AG04450 (cell line): ENCODE measurements at regions of chr18 and their contacts with region 1.

Region 1: DNA sequence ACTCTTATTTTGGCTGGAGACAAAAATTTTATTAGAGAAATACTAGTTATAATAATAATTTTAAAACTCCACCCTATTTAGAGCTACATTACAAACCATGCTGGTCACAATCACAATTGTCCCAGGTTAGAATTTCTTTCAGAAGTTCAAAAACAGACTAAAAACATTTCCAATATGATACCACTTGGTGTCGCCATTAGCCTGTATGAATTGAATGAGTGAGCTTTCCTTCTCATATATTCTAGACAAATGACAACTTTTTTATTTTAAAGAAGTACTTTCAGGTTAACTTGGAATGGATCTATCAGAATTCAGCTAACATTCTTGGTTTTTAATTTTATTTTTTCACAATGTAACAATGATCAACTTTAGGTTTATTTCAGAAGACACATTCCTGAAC is 48.0 kb downstream of the SERPINB8 start:
- DNase-seq: no peak
- H3K4me3 ChIP-seq: no peak overlapping the region
- H3K27ac ChIP-seq: no peak overlapping the region
- H3K27me3 ChIP-seq: no peaks in the 10 kb centered on the region
- CTCF ChIP-seq: peak; percentile 59

Region 2: DNA sequence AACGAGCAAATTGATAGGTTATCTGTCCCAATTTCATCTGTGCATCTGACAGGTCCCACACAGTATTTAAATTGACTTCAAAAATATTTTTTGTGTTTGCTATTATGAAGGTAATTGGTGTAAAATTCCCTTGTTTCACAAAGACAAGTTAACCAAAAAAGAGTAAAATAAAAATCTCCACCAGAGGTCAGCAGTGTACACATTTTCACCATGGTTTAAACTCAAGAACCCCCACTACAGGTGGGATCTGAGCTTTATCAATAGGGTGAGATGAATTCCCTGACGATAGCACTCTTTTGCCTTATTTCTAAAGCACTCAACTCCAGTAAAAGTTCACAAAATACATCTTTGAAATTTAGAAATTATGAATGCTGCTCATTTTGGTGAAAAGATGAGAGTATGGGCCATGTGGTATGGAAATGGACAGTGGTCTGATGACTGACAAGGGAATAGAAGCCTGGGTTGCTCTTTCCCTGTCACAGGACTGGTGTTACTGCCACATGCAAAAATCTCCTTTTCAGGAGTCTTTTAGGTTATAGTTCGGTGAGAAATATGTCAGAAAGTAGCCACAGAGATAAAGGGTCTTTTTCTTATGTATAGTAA is 20.0 kb after region 1 on chr18:
- CTCF ChIA-PET with region 1: interaction called, 12 read pairs
- POLR2A ChIA-PET with region 1: no interaction called
- DNase-seq: no peak
- H3K4me3 ChIP-seq: no peak overlapping the region
- H3K27ac ChIP-seq: no peak overlapping the region
- H3K27me3 ChIP-seq: no peaks in the 10 kb centered on the region
- CTCF ChIP-seq: peak; percentile 47